Sciatic nerve (tissue), 2 donors: ENCODE measurements at regions of chr12 and their contacts with region 1.

Region 1: GRCh38 chr12:48851883-48852733 is at the start of gene DDX23:
- DNase-seq: peak; percentile 94
- ATAC-seq: peak; percentile 99
- total RNA-seq, gene DDX23: 60.2 TPM

Region 2: GRCh38 chr12:48712209-48712608 is 139.9 kb before region 1 on chr12:
- intact Hi-C with region 1: no loop called
- DNase-seq: no peak
- ATAC-seq: no peak

Region 3: GRCh38 chr12:48889679-48890078 is 37.6 kb after region 1 on chr12:
- intact Hi-C with region 1: loop called (anchors 5 kb)
- DNase-seq: no peak
- ATAC-seq: no peak

Region 4: DNA sequence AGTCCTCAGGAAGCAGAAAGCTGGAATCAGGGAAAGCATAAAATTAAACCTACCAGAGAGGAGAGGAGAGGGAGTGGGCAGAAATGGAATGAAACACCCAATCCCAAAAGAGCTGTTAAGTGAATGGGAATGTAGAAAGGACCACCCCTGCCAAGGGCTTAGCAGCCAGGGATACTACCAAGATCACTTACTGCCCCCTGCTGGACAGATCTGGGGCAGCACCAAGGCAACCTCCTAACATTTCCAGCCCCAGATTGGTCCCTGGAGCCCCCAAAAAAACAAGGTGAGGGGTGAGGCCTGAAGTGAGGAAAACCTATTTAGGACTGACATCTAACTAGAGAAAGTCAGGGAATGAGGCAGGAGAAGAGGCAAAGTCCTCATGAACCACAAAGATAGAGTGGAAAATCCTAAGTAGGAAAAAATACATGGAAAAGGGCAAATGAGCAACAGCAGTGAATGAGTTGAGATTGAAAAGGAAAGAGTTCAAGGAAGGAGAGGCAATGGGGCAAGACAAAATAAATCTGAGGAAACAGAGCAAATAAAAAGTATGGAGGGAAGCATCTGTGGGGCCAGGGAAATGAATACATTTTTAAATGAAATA is 84.4 kb after region 1 on chr12:
- intact Hi-C with region 1: loop called (anchors 10 kb)
- DNase-seq: peak; percentile 86
- ATAC-seq: peak; percentile 80

Region 5: DNA sequence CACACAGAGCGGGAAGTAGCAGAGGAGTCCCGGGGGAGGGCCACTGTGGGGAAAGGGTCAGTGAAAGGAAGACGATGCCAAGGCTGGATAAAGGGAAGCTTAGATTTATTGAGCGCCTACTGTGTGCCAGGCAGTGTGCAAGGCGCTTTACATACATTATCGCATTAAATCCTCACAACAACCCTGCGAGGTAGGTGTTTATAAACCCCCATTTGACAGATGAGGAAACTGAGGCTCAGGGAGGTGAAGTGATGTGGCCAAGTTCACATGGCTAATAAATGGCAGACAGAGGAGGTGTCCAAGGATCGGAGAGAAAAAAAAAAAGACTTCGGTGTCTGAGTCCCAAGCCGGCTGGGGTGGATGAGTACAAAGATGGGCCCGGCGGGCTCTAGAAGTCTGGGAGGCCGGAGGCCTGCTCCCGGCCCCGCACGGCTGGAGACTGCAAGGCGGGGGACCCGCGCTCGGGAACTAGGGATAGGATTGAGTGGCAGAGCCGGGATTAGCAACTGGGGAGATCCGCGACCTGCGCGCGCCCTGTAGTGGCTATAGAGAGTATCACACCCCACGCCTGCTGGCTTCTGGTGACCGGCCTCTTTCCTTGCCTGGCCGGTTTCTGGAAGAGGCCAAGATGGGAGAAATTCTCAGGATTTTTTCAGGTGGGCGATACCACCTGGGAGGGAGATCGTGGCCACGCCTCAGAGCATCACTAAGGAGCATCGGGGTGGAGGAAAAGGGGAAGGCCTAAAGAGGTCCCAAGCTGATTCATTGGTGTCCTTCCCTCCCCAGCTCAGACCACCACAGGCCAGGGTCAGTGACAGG is 143.2 kb after region 1 on chr12:
- intact Hi-C with region 1: loop called (anchors 10 kb)
- DNase-seq: peak; percentile 87
- ATAC-seq: peak; percentile 88